Heart left ventricle (tissue), 16 donors: ENCODE measurements at regions of chr3 and their contacts with region 1.

Region 1: GRCh38 chr3:9649791-9650521 is 651 bp downstream of the MTMR14 start:
- DNase-seq: no peak
- ATAC-seq: peak in 2 of 4 donors; percentile 7 to 29
- H3K4me3 ChIP-seq: peak overlapping the region; percentile 86 to 100 (median 94)
- H3K27ac ChIP-seq: peak overlapping the region; percentile 70 to 94 (median 88)
- H3K4me1 ChIP-seq: peaks cover 0 to 50% (median 37%) of the 10 kb centered on the region in 12 donors
- H3K27me3 ChIP-seq: no peaks in the 10 kb centered on the region
- CTCF ChIP-seq: no peak
- POLR2A ChIP-seq: no peak

Region 2: DNA sequence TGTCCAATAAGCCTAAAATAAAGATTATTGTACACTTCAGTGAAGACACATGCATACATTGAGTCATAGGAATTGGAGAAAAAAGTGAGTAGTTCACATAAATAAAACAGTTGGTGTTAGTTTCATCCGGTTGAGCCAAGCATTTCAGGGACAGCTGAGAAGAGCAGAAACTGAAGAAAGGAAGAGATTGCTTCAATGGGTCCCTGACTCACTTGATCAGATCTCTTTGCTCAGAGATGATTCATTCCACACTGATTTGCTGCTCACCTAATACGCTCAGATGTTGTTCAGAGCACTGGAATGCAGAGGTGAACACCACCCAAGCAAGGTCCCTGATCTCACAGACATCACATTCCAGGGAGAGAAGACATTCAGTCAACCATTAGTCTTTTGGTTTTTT is 780.3 kb before region 1 on chr3:
- intact Hi-C with region 1: no loop called
- DNase-seq: no peak
- ATAC-seq: no peak
- H3K4me3 ChIP-seq: no peak overlapping the region
- H3K27ac ChIP-seq: no peak overlapping the region
- H3K4me1 ChIP-seq: no peaks in the 10 kb centered on the region
- H3K27me3 ChIP-seq: no peaks in the 10 kb centered on the region
- CTCF ChIP-seq: no peak
- POLR2A ChIP-seq: no peak

Region 3: DNA sequence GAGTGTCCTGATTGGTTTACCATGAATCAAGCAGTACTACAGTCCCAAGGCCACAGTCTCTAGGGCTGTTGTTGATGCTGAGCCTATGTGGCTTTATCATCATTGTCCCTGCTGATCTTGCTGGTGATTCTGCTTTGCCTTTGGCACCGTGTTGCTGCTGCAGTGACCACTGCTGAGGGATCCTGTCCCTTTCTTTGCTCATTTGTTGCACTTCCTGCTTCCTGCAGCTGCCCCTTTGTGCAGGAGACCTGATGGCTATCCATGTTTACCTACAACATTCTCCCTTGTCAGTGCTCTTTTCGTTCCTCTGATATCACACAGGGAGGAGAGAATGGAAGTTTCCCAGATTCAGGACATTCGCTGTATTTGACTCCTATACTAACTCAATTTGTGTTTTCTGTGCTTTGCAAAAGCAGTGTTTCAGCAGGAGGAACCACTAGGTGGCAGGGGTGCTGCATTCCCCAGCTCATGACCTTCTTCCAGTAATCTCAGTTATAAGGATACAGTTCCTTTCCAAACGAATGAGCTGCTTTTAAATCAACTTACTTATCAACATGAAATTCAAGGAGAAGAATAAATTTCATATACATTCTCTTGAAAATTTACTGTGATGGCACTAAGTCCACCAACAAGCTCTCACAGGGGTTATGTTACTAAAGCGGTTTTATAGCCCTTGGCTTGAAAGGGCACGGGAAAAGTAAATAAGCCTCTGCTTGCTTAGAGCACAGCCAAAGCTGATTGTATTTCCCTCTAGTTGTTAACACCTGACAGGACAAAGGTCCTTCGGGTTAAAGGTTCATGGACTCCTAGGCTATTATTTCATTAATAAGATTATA is 296.8 kb before region 1 on chr3:
- intact Hi-C with region 1: loop called in 2 of 10 experiments (anchors 10 kb)
- DNase-seq: peak in 4 of 5 donors; percentile 56 to 68 (median 64)
- ATAC-seq: peak; percentile 45 to 88 (median 81)
- H3K4me3 ChIP-seq: no peak overlapping the region
- H3K27ac ChIP-seq: no peak overlapping the region
- H3K4me1 ChIP-seq: peaks cover 0 to 8% (median 0%) of the 10 kb centered on the region in 12 donors
- H3K27me3 ChIP-seq: no peaks in the 10 kb centered on the region
- CTCF ChIP-seq: peak; percentile 76 to 93 (median 88)
- POLR2A ChIP-seq: no peak

Region 4: DNA sequence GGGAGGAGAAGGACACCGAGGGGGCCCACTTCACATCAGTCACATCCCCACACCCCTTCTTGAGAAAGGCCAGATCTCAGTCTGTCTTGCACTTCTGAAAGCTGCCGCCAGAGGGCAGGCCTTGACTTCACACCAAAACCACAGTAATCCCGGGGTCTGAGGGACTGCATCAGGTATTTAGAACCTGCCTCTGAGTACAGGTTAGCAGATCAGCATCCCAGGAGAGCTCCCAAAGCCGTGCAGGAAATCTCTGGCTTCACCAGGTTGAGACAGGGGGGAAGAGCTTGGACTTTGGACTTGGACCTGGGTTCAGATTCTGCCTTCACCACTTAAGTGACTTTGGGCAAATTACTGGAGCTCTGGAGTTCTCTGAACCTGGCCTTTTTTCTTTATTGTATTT is 146.7 kb before region 1 on chr3:
- intact Hi-C with region 1: loop called in 1 of 10 experiments (anchors 10 kb)
- DNase-seq: peak; percentile 27 to 77 (median 46)
- ATAC-seq: peak in 2 of 4 donors; percentile 35 to 48
- H3K4me3 ChIP-seq: no peak overlapping the region
- H3K27ac ChIP-seq: no peak overlapping the region
- H3K4me1 ChIP-seq: peaks cover 0 to 13% (median 7%) of the 10 kb centered on the region in 12 donors
- H3K27me3 ChIP-seq: peaks cover 0 to 37% (median 15%) of the 10 kb centered on the region in 9 donors
- CTCF ChIP-seq: peak; percentile 80 to 89 (median 86)
- POLR2A ChIP-seq: no peak

Region 5: GRCh38 chr3:9669720-9670432 is 19.9 kb after region 1 on chr3:
- intact Hi-C with region 1: loop called in 1 of 10 experiments (anchors 2 kb)
- DNase-seq: peak in 4 of 5 donors; percentile 37 to 73 (median 54)
- ATAC-seq: peak; percentile 76 to 92 (median 84)
- H3K4me3 ChIP-seq: no peak overlapping the region
- H3K27ac ChIP-seq: peak overlapping the region; percentile 35 to 92 (median 72)
- H3K4me1 ChIP-seq: peaks cover 0 to 63% (median 38%) of the 10 kb centered on the region in 12 donors
- H3K27me3 ChIP-seq: no peaks in the 10 kb centered on the region
- CTCF ChIP-seq: no peak
- POLR2A ChIP-seq: no peak

Region 6: GRCh38 chr3:9704347-9705322 is 54.7 kb after region 1 on chr3:
- intact Hi-C with region 1: no loop called
- DNase-seq: peak in 3 of 5 donors; percentile 33 to 59 (median 40)
- ATAC-seq: peak in 3 of 4 donors; percentile 69 to 74 (median 70)
- H3K4me3 ChIP-seq: peak overlapping the region in 11 of 12 donors; percentile 1 to 43 (median 36)
- H3K27ac ChIP-seq: no peak overlapping the region
- H3K4me1 ChIP-seq: peaks cover 0 to 18% (median 12%) of the 10 kb centered on the region in 12 donors
- H3K27me3 ChIP-seq: peaks cover 0 to 20% (median 6%) of the 10 kb centered on the region in 9 donors
- CTCF ChIP-seq: no peak
- POLR2A ChIP-seq: no peak

Region 7: GRCh38 chr3:9731206-9732079 is 81.5 kb after region 1 on chr3 and contains the start of gene BRPF1:
- intact Hi-C with region 1: loop called in 2 of 10 experiments (anchors 5 kb)
- DNase-seq: peak; percentile 99 to 100 (median 100)
- ATAC-seq: peak; percentile 99 to 100 (median 99)
- H3K4me3 ChIP-seq: peak within 1 kb of the TSS; percentile 82 to 100 (median 98)
- H3K27ac ChIP-seq: peak within 1 kb of the TSS; percentile 91 to 100 (median 97)
- H3K4me1 ChIP-seq: peaks cover 9 to 52% (median 24%) of the 10 kb centered on the region in 12 donors
- H3K27me3 ChIP-seq: no peaks in the 10 kb centered on the region
- CTCF ChIP-seq: peak in 5 of 12 donors; percentile 8 to 28 (median 21)
- POLR2A ChIP-seq: peak in 1 of 2 donors; percentile 61
- total RNA-seq, gene BRPF1: 9.0 to 17.8 (median 10.6) TPM